ENCODE measurements at regions of chr15 and their contacts with region 1.

Region 1: GRCh38 chr15:76139368-76140073 is 79.7 kb downstream of the TMEM266 start:
- DNase-seq: peak; percentile 38 to 67 (median 58)
- ATAC-seq: peak; percentile 90
- H3K4me3 ChIP-seq: no peak overlapping the region
- H3K4me3 Mint-ChIP-seq: no peak overlapping the region
- H3K27ac ChIP-seq: no peak overlapping the region
- H3K27ac Mint-ChIP-seq: no peak overlapping the region
- H3K4me1 ChIP-seq: no peaks in the 10 kb centered on the region
- H3K4me1 Mint-ChIP-seq: peaks cover 0 to 11% (median 0%) of the 10 kb centered on the region in 7 donors
- H3K27me3 ChIP-seq: no peaks in the 10 kb centered on the region
- H3K27me3 Mint-ChIP-seq: peaks cover 8 to 41% (median 14%) of the 10 kb centered on the region in 5 donors

Region 2: GRCh38 chr15:75809986-75810750 is 329.4 kb before region 1 on chr15:
- CTCF ChIA-PET with region 1: interaction called, 23 read pairs
- POLR2A ChIA-PET with region 1: no interaction called
- intact Hi-C with region 1: loop called in 1 of 2 experiments (anchors 1 kb)
- DNase-seq: peak in 1 of 9 donors; percentile 12
- ATAC-seq: peak; percentile 38
- H3K4me3 ChIP-seq: no peak overlapping the region
- H3K4me3 Mint-ChIP-seq: no peak overlapping the region
- H3K27ac ChIP-seq: no peak overlapping the region
- H3K27ac Mint-ChIP-seq: peak overlapping the region in 1 of 9 donors; percentile 56
- H3K4me1 ChIP-seq: no peaks in the 10 kb centered on the region
- H3K4me1 Mint-ChIP-seq: no peaks in the 10 kb centered on the region
- H3K27me3 ChIP-seq: no peaks in the 10 kb centered on the region
- H3K27me3 Mint-ChIP-seq: peaks cover 0 to 21% (median 6%) of the 10 kb centered on the region in 5 donors

Region 3: DNA sequence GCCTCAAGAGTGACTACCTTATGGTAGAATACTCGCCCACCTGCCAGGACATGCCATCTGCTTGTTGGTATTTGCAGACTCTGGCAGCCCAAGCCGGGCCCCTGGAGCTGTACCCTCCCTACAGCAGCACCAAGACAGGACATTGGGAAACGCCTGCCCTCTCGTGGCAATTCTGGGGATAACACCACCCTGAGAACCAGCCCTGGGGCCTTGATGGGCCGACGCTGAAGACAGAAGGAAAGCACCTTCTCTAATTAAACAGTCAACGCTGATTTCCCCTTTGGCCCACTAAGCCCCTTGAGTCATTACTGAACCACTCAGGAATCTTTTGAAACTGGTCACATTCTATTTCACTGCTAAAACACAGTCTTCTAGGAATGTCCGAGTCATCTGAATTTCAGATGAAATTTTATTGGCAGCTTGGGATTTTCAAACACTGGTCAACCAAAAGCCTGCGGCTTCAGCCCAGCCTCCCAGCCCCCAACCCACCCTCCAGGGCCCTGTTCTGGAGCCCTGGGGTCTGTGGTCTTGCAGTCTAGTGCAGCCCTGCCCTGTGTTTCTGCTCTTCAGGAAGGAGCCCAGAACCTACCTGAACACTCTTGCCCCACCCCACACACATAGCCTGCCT is 11.6 kb after region 1 on chr15:
- CTCF ChIA-PET with region 1: interaction called, 15 read pairs
- POLR2A ChIA-PET with region 1: no interaction called
- intact Hi-C with region 1: no loop called
- DNase-seq: peak; percentile 34 to 77 (median 58)
- ATAC-seq: peak; percentile 91
- H3K4me3 ChIP-seq: no peak overlapping the region
- H3K4me3 Mint-ChIP-seq: peak overlapping the region in 4 of 10 donors; percentile 11 to 43 (median 40)
- H3K27ac ChIP-seq: no peak overlapping the region
- H3K27ac Mint-ChIP-seq: no peak overlapping the region
- H3K4me1 ChIP-seq: peaks cover 0 to 4% of the 10 kb centered on the region in 2 donors
- H3K4me1 Mint-ChIP-seq: peaks cover 7 to 15% (median 11%) of the 10 kb centered on the region in 7 donors
- H3K27me3 ChIP-seq: no peaks in the 10 kb centered on the region
- H3K27me3 Mint-ChIP-seq: peaks cover 7 to 21% (median 10%) of the 10 kb centered on the region in 5 donors